OCI-LY7 (cell line): ENCODE measurements at regions of chr7 and their contacts with region 1.

Region 1: GRCh38 chr7:77830649-77831355 is 32.2 kb downstream of the PHTF2 start:
- DNase-seq: no peak
- H3K4me3 ChIP-seq: no peak overlapping the region
- H3K27ac ChIP-seq: peak overlapping the region; percentile 15
- H3K4me1 ChIP-seq: peaks cover 78% of the 10 kb centered on the region
- CTCF ChIP-seq: no peak

Region 2: GRCh38 chr7:76424721-76425511 is 1405.9 kb before region 1 on chr7 and contains the start of gene ZP3:
- CTCF ChIA-PET with region 1: no interaction called
- POLR2A ChIA-PET with region 1: interaction called, 11 read pairs
- intact Hi-C with region 1: no loop called
- DNase-seq: peak; percentile 7
- H3K4me3 ChIP-seq: no peak within 1 kb of the TSS
- H3K27ac ChIP-seq: no peak within 1 kb of the TSS
- H3K4me1 ChIP-seq: no peaks in the 10 kb centered on the region
- CTCF ChIP-seq: no peak
- total RNA-seq, gene ZP3: 0.98 and 2.0 TPM in 2 replicates

Region 3: GRCh38 chr7:77843194-77843593 is 12.4 kb after region 1 on chr7:
- CTCF ChIA-PET with region 1: interaction called, 3 read pairs
- POLR2A ChIA-PET with region 1: interaction called, 19 read pairs
- intact Hi-C with region 1: no loop called
- DNase-seq: no peak
- H3K4me3 ChIP-seq: no peak overlapping the region
- H3K27ac ChIP-seq: no peak overlapping the region
- H3K4me1 ChIP-seq: peaks cover 24% of the 10 kb centered on the region
- CTCF ChIP-seq: no peak

Region 4: GRCh38 chr7:78530351-78530750 is 699.5 kb after region 1 on chr7:
- CTCF ChIA-PET with region 1: no interaction called
- POLR2A ChIA-PET with region 1: no interaction called
- intact Hi-C with region 1: no loop called
- DNase-seq: no peak
- H3K4me3 ChIP-seq: no peak overlapping the region
- H3K27ac ChIP-seq: no peak overlapping the region
- H3K4me1 ChIP-seq: no peaks in the 10 kb centered on the region
- CTCF ChIP-seq: no peak